Activated T-helper 1 cell treated with anti-CD3 and anti-CD28 coated beads, Interleukin-12 subunit alpha, Interleukin-12 subunit beta, Interleukin-2, Interleukin-4 antibody, amounts not matched to agents 30 ng/mL and 10 ng/mL and 1 ng/mL, durations not matched to agents 14 hours and 24 hours and 36 hours (primary cell): ENCODE measurements at regions of chr6 and their contacts with region 1.

Region 1: GRCh38 chr6:43629505-43630300 is 639 bp upstream of the GTPBP2 start:
- DNase-seq: peak; percentile 94
- H3K4me3 Mint-ChIP-seq: peak overlapping the region; percentile 99
- H3K27ac Mint-ChIP-seq: peak overlapping the region; percentile 95
- H3K4me1 Mint-ChIP-seq: peaks cover 44% of the 10 kb centered on the region
- H3K27me3 Mint-ChIP-seq: no peaks in the 10 kb centered on the region

Region 2: DNA sequence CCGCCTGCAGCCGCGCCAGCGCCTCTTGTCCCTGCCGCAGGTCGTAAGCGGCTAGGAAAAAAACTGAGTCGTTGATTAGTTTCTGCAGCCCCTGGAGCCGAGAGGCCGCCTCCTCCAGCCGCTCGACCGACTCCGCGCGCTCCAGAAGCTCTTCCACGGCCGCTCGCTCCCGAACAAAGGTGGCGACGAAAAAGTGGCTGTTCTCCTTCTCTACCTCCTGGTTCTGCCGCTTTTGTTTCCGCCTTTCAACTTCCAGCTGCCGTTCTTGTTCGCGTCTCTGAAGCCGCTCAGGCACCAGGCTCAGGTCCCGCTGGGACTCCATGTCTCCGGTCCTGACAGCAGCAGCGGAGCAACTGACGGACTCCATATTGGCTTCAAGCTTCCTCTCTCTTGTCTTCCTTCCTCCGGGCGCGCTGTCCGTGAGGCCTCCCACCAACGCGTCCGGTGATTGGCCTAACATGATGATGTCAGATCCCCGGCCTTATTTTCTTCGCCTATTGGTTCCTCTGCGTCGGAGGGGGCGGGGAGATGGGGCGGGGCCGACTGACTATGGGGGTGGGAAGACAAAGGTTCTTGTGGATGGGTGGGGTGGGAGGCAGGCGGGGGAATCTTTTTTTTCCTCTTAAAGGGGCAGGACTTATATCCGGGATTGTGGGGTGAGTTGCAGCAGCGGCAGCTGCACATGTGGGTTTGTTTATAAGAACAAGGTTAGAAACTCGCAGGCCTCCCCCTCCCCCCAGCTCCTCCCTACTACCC is 883.8 kb before region 1 on chr6 and contains the start of gene TBCC:
- intact Hi-C with region 1: loop called (anchors 2 kb)
- DNase-seq: peak; percentile 91
- H3K4me3 Mint-ChIP-seq: peak within 1 kb of the TSS; percentile 100
- H3K27ac Mint-ChIP-seq: peak within 1 kb of the TSS; percentile 100
- H3K4me1 Mint-ChIP-seq: peaks cover 32% of the 10 kb centered on the region
- H3K27me3 Mint-ChIP-seq: no peaks in the 10 kb centered on the region
- total RNA-seq, gene TBCC: 20.1 and 22.3 TPM in 2 replicates

Region 3: DNA sequence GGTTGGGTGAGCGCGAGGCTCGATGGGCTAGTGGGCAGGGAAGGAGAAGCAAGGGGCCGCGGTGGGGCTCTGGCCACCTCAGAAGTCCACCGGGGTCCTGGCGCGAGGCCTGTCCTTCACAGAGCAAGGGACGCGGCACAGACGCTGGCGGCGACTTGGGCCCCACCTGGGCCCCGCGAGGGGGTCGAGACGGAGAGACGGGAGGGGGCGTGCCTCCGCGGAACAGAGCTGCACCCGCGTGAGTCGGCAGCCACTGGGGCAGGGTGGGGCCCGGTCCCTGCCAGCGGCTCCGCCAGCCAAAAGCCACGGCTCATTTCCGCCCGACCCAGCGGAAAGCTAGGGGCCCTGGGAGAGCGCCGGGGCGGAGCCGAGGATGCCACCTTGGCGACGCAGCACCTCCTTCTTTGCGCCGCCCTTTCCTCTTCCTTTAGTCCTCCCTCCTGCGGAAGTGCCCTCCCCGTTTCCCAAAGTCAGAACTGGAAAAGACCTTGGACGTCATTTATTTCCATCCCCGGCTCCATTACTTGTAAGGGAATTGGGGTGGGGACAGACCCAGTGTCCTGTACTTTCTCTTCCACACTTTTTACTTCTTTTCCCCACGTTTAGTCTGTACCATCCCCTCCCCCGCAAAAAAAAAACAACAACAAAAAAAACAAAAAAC is 576.0 kb before region 1 on chr6 and contains the start of gene CUL7:
- intact Hi-C with region 1: loop called (anchors 1 kb)
- DNase-seq: peak; percentile 89
- H3K4me3 Mint-ChIP-seq: peak within 1 kb of the TSS; percentile 99
- H3K27ac Mint-ChIP-seq: peak within 1 kb of the TSS; percentile 98
- H3K4me1 Mint-ChIP-seq: peaks cover 53% of the 10 kb centered on the region
- H3K27me3 Mint-ChIP-seq: no peaks in the 10 kb centered on the region
- total RNA-seq, gene CUL7: 20.1 and 23.2 TPM in 2 replicates

Region 4: DNA sequence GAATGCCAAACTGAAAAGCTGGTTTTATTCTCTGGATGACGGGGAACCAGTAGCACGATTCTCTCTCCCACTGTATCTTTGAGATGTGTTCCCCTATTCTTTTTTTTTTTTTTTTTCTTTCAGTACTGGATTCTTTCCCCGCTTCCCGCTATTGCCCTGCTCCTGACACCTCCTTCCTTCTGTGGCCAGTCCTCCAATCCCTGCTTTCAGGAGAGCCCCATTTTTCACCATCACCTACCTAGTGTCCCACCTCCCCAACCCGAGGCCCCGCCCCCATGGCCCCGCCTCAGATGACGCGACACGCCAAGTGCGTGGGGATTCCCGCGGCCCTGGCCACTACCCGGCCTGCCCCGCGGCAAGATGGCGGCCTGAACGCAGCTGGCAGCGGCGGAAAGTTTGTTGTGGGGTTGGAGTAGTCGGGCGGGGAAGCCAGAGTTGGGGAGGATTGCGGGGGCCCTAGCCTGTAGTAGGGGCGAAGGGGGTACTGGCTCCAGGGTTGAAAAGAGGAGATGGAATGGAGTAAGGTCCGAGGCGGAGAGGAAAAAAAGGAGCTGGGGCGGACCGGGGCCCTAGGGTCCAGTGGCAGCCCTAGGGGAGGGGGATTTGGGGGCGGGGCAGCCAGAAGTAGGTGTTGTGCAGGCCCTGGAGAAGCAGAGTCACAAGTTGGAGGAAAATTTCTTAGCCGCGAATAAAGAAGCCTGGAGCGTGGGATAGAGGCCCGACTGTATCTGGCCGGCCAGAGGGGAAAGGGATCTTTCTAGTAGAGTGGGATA is 152.3 kb before region 1 on chr6 and contains the start of gene TJAP1:
- intact Hi-C with region 1: loop called (anchors 1 kb)
- DNase-seq: peak; percentile 94
- H3K4me3 Mint-ChIP-seq: peak within 1 kb of the TSS; percentile 97
- H3K27ac Mint-ChIP-seq: peak within 1 kb of the TSS; percentile 97
- H3K4me1 Mint-ChIP-seq: peaks cover 33% of the 10 kb centered on the region
- H3K27me3 Mint-ChIP-seq: no peaks in the 10 kb centered on the region
- total RNA-seq, gene TJAP1: 43.4 and 48.2 TPM in 2 replicates

Region 5: GRCh38 chr6:43559328-43559727 is 70.4 kb before region 1 on chr6:
- intact Hi-C with region 1: no loop called
- DNase-seq: no peak
- H3K4me3 Mint-ChIP-seq: no peak overlapping the region
- H3K27ac Mint-ChIP-seq: no peak overlapping the region
- H3K4me1 Mint-ChIP-seq: no peaks in the 10 kb centered on the region
- H3K27me3 Mint-ChIP-seq: no peaks in the 10 kb centered on the region

Region 6: GRCh38 chr6:43608310-43608763 is 21.4 kb before region 1 on chr6:
- intact Hi-C with region 1: loop called (anchors 2 kb)
- DNase-seq: no peak
- H3K4me3 Mint-ChIP-seq: no peak overlapping the region
- H3K27ac Mint-ChIP-seq: peak overlapping the region; percentile 18
- H3K4me1 Mint-ChIP-seq: peaks cover 4% of the 10 kb centered on the region
- H3K27me3 Mint-ChIP-seq: no peaks in the 10 kb centered on the region

Region 7: GRCh38 chr6:43769526-43770416 is 140.1 kb after region 1 on chr6 and contains the start of gene VEGFA:
- intact Hi-C with region 1: loop called (anchors 1 kb)
- DNase-seq: peak; percentile 83
- H3K4me3 Mint-ChIP-seq: peak within 1 kb of the TSS; percentile 97
- H3K27ac Mint-ChIP-seq: peak within 1 kb of the TSS; percentile 95
- H3K4me1 Mint-ChIP-seq: peaks cover 29% of the 10 kb centered on the region
- H3K27me3 Mint-ChIP-seq: peaks cover 5% of the 10 kb centered on the region
- total RNA-seq, gene VEGFA: 42.3 and 43.2 TPM in 2 replicates

Region 8: GRCh38 chr6:44246663-44247337 is 617.1 kb after region 1 on chr6 and contains the start of gene HSP90AB1:
- intact Hi-C with region 1: loop called (anchors 5 kb)
- DNase-seq: peak; percentile 96
- H3K4me3 Mint-ChIP-seq: peak within 1 kb of the TSS; percentile 96
- H3K27ac Mint-ChIP-seq: peak within 1 kb of the TSS; percentile 98
- H3K4me1 Mint-ChIP-seq: peaks cover 45% of the 10 kb centered on the region
- H3K27me3 Mint-ChIP-seq: peaks cover 5% of the 10 kb centered on the region
- total RNA-seq, gene HSP90AB1: 2,065 and 2,095 TPM in 2 replicates